ENCODE measurements at regions of chr10 and their contacts with region 1.

Region 1: DNA sequence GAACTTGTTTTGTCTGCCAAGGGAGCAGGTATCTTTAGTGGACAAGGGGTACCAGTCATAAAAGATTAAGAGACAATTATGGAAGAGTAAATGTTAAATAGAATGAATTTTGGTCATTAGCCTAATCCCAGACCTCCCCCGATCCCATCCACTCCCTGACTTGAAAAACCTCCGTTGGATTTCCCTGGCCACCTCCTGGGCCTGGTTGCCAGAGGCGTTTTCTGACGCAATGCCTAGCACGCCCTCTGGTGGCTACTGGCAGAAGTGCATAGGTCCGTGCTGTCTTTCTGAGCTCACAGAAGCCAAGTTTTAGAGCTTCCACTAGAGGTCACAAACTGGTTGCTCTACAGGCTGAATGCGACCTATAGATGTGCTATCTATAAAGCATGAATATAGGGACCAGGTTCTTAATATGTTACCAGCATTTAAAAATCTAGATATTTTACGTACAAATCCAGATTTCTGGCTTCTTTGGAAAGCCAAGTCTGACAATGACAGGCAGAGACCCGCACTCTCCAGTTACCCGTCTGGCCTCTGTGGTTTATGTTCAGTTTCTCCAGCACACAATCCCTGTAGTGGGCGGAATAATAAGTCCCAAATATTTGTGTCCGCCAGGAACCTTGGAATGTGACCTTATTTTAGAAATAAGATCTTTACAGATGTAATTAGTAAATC is 39.8 kb downstream of the SPOCK2 start:
- DNase-seq: peak; percentile 93
- ATAC-seq: peak; percentile 97
- H3K4me3 Mint-ChIP-seq: no peak overlapping the region
- H3K27ac Mint-ChIP-seq: peak overlapping the region; percentile 60
- H3K4me1 Mint-ChIP-seq: peaks cover 14% of the 10 kb centered on the region
- H3K27me3 Mint-ChIP-seq: no peaks in the 10 kb centered on the region

Region 2: DNA sequence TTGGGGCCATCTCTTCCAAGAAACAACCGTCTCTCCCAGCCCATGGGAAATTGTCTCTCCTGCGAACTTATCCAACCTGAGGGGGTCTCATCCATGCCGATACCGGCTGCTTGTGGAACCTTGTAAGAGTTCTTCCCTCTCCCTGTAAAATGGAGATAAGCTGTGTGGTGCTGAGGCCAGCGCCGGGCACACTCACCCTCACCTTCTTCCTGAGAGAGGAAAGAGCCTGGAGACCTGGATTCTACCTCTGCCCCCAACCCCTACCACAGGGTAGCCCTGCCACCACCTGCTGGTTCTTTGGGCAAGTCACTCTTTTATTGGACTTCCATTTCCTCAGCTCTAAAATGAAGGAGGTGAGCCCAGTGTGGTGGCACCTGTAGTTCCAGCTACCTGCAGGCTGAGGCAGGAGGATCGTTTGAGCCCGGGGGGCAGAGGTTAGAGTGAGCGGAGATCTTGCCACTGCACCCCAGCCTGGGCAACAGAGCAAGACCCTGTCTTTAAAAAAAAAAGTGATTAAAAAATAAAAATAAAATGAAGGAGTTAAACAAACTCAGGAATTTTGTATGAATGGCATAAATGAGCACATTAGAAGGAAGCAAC is 159.1 kb before region 1 on chr10:
- CTCF ChIA-PET with region 1: interaction called, 97 read pairs
- POLR2A ChIA-PET with region 1: no interaction called
- DNase-seq: no peak
- ATAC-seq: no peak
- H3K4me3 Mint-ChIP-seq: peak overlapping the region; percentile 82
- H3K27ac Mint-ChIP-seq: peak overlapping the region; percentile 83
- H3K4me1 Mint-ChIP-seq: peaks cover 15% of the 10 kb centered on the region
- H3K27me3 Mint-ChIP-seq: peaks cover 24% of the 10 kb centered on the region

Region 3: DNA sequence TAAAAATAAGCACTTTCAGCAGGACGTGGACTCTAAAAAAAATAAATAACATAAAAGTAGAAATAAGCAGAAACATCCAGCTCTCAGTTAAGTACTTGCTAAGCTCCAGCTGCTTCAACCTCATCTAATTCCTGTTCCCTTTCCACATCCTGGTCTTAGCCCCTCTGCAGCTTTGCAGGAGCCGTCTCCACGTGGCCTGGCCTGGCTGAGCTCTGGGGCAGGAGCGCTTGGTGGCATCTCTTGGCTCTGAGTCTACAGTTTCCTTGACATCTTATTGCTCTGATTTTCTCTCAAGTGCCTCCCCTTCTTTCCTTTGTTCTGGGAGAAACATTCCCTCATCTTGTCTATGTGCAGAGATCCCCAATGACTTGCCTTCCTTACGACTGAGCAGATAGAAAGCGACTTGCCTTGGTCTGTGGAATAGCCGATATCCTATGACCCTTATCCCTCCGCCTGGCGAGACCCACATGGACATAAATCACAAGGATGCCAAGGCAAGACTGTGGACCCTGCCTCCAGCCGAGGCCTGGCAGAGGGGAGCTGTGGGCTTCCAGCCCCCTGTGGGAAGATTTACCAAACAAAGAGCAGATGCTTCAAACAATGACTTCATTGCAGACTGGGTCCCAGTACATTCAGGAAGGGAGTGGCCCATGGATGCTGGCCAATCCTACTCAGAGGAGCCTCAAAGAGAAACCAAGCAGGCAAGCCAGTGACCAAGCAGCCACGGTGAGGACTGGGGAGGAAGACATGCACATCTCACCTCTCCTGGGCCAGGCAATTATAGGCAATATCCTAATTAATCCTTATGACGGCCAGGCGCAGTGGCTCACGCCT is 22.1 kb before region 1 on chr10:
- CTCF ChIA-PET with region 1: interaction called, 14 read pairs
- POLR2A ChIA-PET with region 1: no interaction called
- DNase-seq: no peak
- ATAC-seq: no peak
- H3K4me3 Mint-ChIP-seq: no peak overlapping the region
- H3K27ac Mint-ChIP-seq: no peak overlapping the region
- H3K4me1 Mint-ChIP-seq: peaks cover 1% of the 10 kb centered on the region
- H3K27me3 Mint-ChIP-seq: peaks cover 6% of the 10 kb centered on the region

Region 4: GRCh38 chr10:72069751-72070526 is 21.4 kb after region 1 on chr10:
- CTCF ChIA-PET with region 1: interaction called, 26 read pairs
- POLR2A ChIA-PET with region 1: no interaction called
- DNase-seq: no peak
- ATAC-seq: no peak
- H3K4me3 Mint-ChIP-seq: no peak overlapping the region
- H3K27ac Mint-ChIP-seq: peak overlapping the region; percentile 77
- H3K4me1 Mint-ChIP-seq: peaks cover 42% of the 10 kb centered on the region
- H3K27me3 Mint-ChIP-seq: no peaks in the 10 kb centered on the region

Region 5: GRCh38 chr10:72107325-72108003 is 58.9 kb after region 1 on chr10:
- CTCF ChIA-PET with region 1: interaction called, 14 read pairs
- POLR2A ChIA-PET with region 1: no interaction called
- DNase-seq: peak; percentile 65
- ATAC-seq: peak; percentile 72
- H3K4me3 Mint-ChIP-seq: peak overlapping the region; percentile 77
- H3K27ac Mint-ChIP-seq: peak overlapping the region; percentile 92
- H3K4me1 Mint-ChIP-seq: peaks cover 61% of the 10 kb centered on the region
- H3K27me3 Mint-ChIP-seq: no peaks in the 10 kb centered on the region

Region 6: DNA sequence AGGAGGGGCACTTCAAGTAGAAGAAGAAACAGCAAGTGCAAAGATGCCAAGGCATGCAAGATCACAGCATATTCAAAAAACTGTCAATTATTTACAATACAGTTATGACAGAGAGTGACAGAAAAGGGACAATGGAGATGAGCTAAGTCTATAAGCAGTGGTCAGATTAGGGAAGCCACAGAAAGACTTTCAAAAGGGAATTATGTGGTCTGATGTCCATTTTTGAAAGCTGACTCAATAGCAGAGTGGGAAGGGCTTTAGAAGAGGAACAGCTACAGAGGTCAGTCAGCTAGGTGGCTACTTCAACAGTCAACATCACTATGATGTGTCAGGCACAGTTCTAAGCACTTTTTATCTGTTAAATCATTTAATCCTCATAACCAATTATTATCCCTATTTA is 84.9 kb after region 1 on chr10:
- CTCF ChIA-PET with region 1: interaction called, 19 read pairs
- POLR2A ChIA-PET with region 1: no interaction called
- DNase-seq: no peak
- ATAC-seq: no peak
- H3K4me3 Mint-ChIP-seq: no peak overlapping the region
- H3K27ac Mint-ChIP-seq: no peak overlapping the region
- H3K4me1 Mint-ChIP-seq: peaks cover 52% of the 10 kb centered on the region
- H3K27me3 Mint-ChIP-seq: no peaks in the 10 kb centered on the region

Region 7: DNA sequence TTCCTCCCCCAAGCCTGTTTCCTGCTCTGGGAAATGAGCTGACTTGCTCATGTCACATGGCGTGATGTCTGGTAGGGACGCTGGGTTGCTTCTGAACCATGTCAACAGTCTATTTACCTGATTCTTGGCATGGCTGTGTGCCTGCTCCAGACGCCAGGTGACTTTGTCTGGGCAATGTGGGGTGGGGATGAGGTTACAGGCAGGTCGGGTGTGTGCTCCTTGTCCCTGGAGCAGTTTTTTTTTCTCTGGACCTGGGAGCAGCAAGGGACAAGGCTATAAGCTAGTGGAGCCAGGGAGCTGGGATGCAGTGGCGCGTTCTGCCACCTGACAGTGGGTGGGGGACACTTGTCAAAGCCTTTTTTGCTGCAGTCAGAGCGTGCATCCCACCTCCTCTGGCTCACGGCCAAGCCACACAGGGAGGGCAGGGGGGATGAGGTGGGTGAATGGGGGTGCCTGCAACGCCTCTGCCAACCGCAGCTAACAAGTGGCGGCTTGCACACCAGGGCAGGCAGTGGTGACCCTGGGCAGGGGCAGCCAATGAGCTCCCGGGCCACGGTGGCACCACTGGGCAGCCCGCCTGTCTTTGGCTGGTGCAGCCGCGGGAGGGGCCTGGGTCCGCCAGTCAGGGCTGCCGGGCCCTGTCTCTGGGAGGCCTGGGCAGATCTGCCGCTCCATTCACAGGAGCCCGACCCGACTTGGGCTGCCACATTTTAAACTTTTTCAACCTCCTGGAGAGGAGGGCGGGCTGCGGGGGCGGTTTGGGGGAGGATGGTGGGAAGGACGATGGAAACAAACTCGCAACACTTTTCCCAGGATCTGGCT is 283.2 kb after region 1 on chr10:
- CTCF ChIA-PET with region 1: interaction called, 80 read pairs
- POLR2A ChIA-PET with region 1: interaction called, 4 read pairs
- DNase-seq: peak; percentile 94
- ATAC-seq: peak; percentile 66
- H3K4me3 Mint-ChIP-seq: peak overlapping the region; percentile 64
- H3K27ac Mint-ChIP-seq: peak overlapping the region; percentile 91
- H3K4me1 Mint-ChIP-seq: peaks cover 95% of the 10 kb centered on the region
- H3K27me3 Mint-ChIP-seq: no peaks in the 10 kb centered on the region

Measured in activated CD8-positive, alpha-beta T cell treated with anti-CD3 and anti-CD28 coated beads, Interleukin-2, amount 10 ng/mL, durations not matched to agents 7 days and 5 days (primary cell).